Posterior vena cava (tissue), 2 donors: ENCODE measurements at regions of chr2 and their contacts with region 1.

Region 1: GRCh38 chr2:30366199-30366691 is 80.8 kb upstream of the LCLAT1 start:
- DNase-seq: no peak

Region 2: GRCh38 chr2:30239308-30239985 is 126.8 kb before region 1 on chr2:
- intact Hi-C with region 1: loop called in 1 of 2 experiments (anchors 5 kb)
- DNase-seq: peak; percentile 92

Region 3: DNA sequence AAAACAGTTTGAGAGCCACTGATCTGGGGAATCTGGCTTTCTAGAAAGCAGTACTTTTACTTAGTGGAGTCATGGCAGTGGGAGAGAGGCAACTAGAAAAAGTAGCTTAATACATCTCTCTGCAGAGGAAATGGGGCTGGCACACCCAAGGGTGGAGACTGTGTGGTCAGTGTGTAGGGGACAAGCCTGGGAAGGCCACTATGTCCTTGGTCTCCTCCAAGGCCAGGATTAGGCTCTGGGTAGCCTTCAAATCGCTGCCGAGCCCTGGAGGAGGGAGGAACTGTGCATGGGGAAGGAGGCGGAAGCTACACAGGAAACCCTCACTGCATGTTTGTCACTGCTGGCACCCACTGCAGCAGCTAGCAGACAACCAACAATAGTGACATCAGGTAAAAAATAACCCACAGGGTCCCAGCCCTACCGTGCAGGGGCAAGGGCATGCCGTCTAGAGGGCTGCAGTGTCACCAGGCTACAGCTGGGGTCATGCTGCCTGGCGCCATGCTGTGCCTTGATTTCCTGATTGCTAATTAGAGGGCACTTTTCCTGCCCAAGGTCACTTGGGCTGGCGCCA is 100.1 kb before region 1 on chr2:
- intact Hi-C with region 1: loop called in 1 of 2 experiments (anchors 10 kb)
- DNase-seq: no peak

Region 4: DNA sequence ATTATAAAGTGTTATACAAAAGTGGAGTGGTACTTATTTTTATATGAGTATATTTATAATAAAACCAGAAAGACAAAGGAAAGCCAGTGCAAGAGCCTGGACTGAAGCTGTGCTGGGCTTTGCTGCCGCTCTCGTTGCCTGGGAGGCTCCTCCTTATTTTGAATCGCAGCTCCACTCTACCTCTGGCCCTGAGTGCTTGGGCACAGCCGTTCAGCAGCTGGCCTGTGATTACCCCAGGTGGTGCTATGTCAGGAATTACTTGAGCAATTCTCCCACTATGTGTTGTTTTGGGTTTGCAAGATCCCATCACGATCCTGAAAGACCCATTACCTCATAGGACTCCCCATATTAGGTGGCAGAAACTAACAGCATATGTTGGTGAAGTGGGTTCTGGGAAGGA is 27.9 kb after region 1 on chr2:
- intact Hi-C with region 1: no loop called
- DNase-seq: no peak

Region 5: DNA sequence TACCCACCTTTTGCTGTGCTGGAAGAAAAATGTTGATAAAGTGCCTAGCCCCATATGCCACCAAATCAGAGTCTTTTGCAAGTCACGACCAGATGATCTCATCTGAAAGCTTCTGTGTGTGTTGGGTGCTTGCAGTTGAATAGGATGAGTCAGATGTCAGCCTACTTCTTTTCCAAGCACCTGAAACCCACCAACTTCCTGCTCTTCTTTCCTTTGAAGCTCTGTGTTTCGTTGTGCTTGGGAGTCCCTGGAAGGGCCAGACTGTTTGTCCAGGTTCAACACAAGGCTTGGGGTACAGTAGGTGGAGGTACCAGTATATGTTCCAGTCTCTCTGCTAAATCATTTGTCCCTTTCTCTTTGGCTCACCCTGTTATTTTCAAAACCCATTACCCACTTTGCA is 44.0 kb after region 1 on chr2:
- intact Hi-C with region 1: loop called in 1 of 2 experiments (anchors 5 kb)
- DNase-seq: no peak

Region 6: GRCh38 chr2:30447149-30448045 is 81.2 kb after region 1 on chr2 and contains the start of gene LCLAT1:
- intact Hi-C with region 1: no loop called
- DNase-seq: peak; percentile 95
- total RNA-seq, gene LCLAT1: 22.3 to 43.3 TPM

Region 7: GRCh38 chr2:31253356-31254131 is 887.3 kb after region 1 on chr2:
- intact Hi-C with region 1: no loop called
- DNase-seq: no peak